ENCODE measurements at regions of chr19 and their contacts with region 1.

Region 1: DNA sequence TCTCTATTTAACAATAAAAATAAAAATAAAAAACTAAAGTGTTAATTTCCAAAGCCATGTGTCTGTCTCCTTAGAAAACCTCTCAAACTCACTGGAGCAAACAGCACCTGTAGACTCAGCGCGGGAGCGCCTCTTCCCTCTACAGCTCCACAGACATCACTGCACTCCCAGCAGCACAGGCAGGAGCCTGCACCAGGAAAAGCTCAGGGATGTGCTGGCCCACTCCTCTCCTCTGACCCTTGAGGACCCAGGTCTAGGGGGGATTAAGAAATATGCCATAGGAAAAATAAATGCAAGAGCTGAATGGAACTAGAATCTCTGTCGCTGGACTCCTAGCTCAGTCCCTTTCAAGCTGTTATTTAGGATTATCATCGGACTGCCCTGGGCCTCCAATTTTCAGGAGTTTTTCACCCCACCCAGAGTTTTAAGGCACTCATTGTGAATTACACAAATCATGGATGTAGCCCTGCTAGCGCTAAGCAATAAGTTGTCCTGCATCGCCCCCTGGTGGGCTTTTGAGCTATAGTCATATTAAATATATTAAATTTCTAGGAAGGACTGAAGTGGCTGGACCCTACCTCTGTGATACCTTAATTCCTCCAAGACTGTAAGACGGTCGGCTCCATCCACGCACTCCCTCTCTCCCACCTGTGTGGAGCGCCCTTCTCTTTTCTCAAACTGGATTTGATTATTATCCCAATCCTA is 333.9 kb downstream of the UQCRFS1 start:
- DNase-seq: peak; percentile 75
- H3K4me3 Mint-ChIP-seq: no peak overlapping the region
- H3K27ac Mint-ChIP-seq: no peak overlapping the region
- H3K4me1 Mint-ChIP-seq: no peaks in the 10 kb centered on the region
- H3K27me3 Mint-ChIP-seq: peaks cover 13% of the 10 kb centered on the region

Region 2: GRCh38 chr19:28466107-28467045 is 412.6 kb before region 1 on chr19:
- CTCF ChIA-PET with region 1: interaction called, 8 read pairs
- intact Hi-C with region 1: loop called (anchors 1 kb)
- DNase-seq: peak; percentile 77
- H3K4me3 Mint-ChIP-seq: no peak overlapping the region
- H3K27ac Mint-ChIP-seq: no peak overlapping the region
- H3K4me1 Mint-ChIP-seq: peaks cover 14% of the 10 kb centered on the region
- H3K27me3 Mint-ChIP-seq: peaks cover 6% of the 10 kb centered on the region

Region 3: GRCh38 chr19:28737021-28737895 is 141.8 kb before region 1 on chr19:
- CTCF ChIA-PET with region 1: interaction called, 18 read pairs
- intact Hi-C with region 1: loop called (anchors 1 kb)
- DNase-seq: peak; percentile 31
- H3K4me3 Mint-ChIP-seq: no peak overlapping the region
- H3K27ac Mint-ChIP-seq: no peak overlapping the region
- H3K4me1 Mint-ChIP-seq: peaks cover 4% of the 10 kb centered on the region
- H3K27me3 Mint-ChIP-seq: peaks cover 7% of the 10 kb centered on the region

Measured in activated naive CD4-positive, alpha-beta T cell treated with anti-CD3 and anti-CD28 coated beads for 36 hours (primary cell).